Common myeloid progenitor, CD34-positive (primary cell): ENCODE measurements at regions of chr4 and their contacts with region 1.

Region 1: DNA sequence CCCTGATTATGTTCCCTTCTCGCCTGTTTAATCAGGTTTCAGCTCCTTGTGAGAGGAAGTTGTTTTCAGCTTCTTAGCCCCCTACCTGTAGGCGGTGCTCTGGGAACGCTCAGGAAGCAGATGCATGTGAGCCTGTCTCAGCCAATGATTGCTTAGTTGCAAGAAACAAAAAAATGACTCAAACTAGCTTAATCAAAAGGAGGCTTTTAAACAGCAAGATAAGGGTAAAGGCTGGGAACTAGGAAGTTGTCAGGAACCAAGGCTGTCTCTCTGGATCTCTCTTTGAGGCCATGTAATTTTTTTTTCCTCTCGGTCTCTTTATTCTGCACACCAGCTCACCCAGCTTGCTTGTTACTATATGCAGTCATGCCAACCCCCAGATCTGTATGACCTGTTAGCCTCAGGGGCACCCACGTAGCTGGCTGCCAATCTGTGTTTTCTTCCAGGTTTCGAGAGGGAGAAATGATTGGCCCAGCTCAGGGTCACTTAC is 109.1 kb downstream of the PTTG2 start:
- DNase-seq: peak; percentile 55 to 79 (median 65)
- H3K4me3 ChIP-seq: no peak overlapping the region
- H3K27ac ChIP-seq: no peak overlapping the region
- H3K4me1 ChIP-seq: peaks cover 8 to 25% (median 17%) of the 10 kb centered on the region in 4 experiments
- H3K27me3 ChIP-seq: no peaks in the 10 kb centered on the region

Region 2: GRCh38 chr4:37953620-37954293 is 115.6 kb before region 1 on chr4:
- CTCF ChIA-PET with region 1: no interaction called
- POLR2A ChIA-PET with region 1: no interaction called
- DNase-seq: no peak
- H3K4me3 ChIP-seq: no peak overlapping the region
- H3K27ac ChIP-seq: no peak overlapping the region
- H3K4me1 ChIP-seq: peaks cover 0 to 17% (median 12%) of the 10 kb centered on the region in 4 experiments
- H3K27me3 ChIP-seq: no peaks in the 10 kb centered on the region

Region 3: GRCh38 chr4:38091636-38092035 is 22.3 kb after region 1 on chr4:
- CTCF ChIA-PET with region 1: interaction called, 16 read pairs
- POLR2A ChIA-PET with region 1: no interaction called
- DNase-seq: peak in 2 of 3 donors; percentile 78 to 90
- H3K4me3 ChIP-seq: peak overlapping the region in 1 of 7 experiments; percentile 6
- H3K27ac ChIP-seq: no peak overlapping the region
- H3K4me1 ChIP-seq: peaks cover 7 to 53% (median 35%) of the 10 kb centered on the region in 4 experiments
- H3K27me3 ChIP-seq: no peaks in the 10 kb centered on the region

Region 4: GRCh38 chr4:38174801-38175200 is 105.5 kb after region 1 on chr4:
- CTCF ChIA-PET with region 1: interaction called, 61 read pairs
- POLR2A ChIA-PET with region 1: no interaction called
- DNase-seq: peak; percentile 30 to 83 (median 74)
- H3K4me3 ChIP-seq: peak overlapping the region in 3 of 7 experiments; percentile 14 to 52 (median 31)
- H3K27ac ChIP-seq: peak overlapping the region in 1 of 2 experiments; percentile 16
- H3K4me1 ChIP-seq: peaks cover 35 to 57% (median 50%) of the 10 kb centered on the region in 4 experiments
- H3K27me3 ChIP-seq: no peaks in the 10 kb centered on the region